Right ventricle myocardium superior (tissue), 1 donor: ENCODE measurements at regions of chr5 and their contacts with region 1.

Region 1: GRCh38 chr5:41856644-41857491 is 13.4 kb downstream of the OXCT1 start:
- DNase-seq: no peak
- ATAC-seq: peak; percentile 94

Region 2: GRCh38 chr5:41924872-41925554 is 68.1 kb after region 1 on chr5 and contains the start of gene FBXO4:
- intact Hi-C with region 1: loop called (anchors 5 kb)
- DNase-seq: peak; percentile 92
- ATAC-seq: peak; percentile 99
- total RNA-seq, gene FBXO4: 3.8 TPM

Region 3: GRCh38 chr5:42057254-42057690 is 200.4 kb after region 1 on chr5:
- intact Hi-C with region 1: loop called (anchors 2 kb)
- DNase-seq: no peak
- ATAC-seq: peak; percentile 59

Region 4: GRCh38 chr5:42767491-42768105 is 910.7 kb after region 1 on chr5:
- intact Hi-C with region 1: loop called (anchors 10 kb)
- DNase-seq: no peak
- ATAC-seq: peak; percentile 55